ENCODE measurements at regions of chr11 and their contacts with region 1.

Region 1: GRCh38 chr11:80241768-80242167 is 800.9 kb upstream of the TENM4 start:
- DNase-seq: no peak
- ATAC-seq: no peak

Region 2: DNA sequence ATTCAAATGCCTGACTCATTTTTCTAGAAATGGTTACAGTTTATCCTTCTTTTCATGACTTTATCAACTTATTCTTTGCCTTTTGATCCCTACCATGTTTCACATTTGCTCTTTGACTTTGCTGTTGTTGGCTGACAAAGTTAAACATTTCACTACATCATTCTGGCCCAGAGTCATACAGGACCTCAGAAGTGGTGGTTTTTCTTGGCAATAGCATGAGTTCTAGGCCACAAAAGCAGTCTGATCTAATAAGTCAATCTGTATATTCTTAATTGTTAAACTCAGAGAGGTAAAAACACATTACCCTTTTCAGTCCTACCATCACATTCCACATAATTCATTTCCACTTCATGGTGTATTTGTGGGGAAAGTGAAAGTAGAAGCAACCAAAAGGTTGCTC is 37.7 kb before region 1 on chr11:
- intact Hi-C with region 1: loop called (anchors 2 kb)
- DNase-seq: no peak
- ATAC-seq: no peak